ENCODE measurements at regions of chr13 and their contacts with region 1.

Region 1: GRCh38 chr13:99606324-99607066 is 105.2 kb downstream of the TM9SF2 start:
- DNase-seq: peak; percentile 87
- H3K4me3 ChIP-seq: peak within 1 kb of the TSS; percentile 56 to 72
- H3K27ac ChIP-seq: peak within 1 kb of the TSS; percentile 72 to 76
- H3K4me1 ChIP-seq: no peaks in the 10 kb centered on the region
- H3K27me3 ChIP-seq: no peaks in the 10 kb centered on the region
- CTCF ChIP-seq: peak in 2 of 4 experiments; percentile 22 to 29
- POLR2A ChIP-seq: peak; percentile 74

Region 2: DNA sequence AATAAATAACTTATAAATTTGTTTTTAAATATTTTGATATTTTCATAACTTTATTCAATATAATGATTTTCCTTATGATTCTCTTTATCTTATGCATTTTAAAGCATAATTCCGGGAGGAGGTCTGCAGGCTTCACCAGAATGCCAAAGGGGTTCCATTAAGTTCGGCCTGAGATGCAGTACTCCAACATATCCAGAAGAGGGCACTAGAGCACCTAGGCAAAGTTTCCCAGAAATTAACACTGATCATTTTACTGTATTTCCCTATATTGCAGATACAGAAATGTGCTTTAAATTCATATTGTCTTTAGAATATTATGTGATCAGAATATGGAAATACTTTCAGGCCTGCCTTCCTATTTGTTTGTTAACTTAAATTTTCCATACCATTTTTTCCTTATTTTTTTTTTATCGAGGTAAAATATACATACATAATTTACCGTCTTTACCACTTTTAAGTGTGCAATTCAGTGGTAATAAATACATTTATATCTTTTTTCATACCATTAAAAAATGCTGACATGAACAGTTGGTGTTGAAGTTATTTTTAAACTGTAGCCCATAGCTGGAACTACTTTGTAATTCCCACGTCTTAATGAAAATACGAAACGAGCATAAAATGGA is 164.1 kb before region 1 on chr13:
- intact Hi-C with region 1: loop called (anchors 10 kb)
- DNase-seq: peak; percentile 40
- H3K4me3 ChIP-seq: no peak overlapping the region
- H3K27ac ChIP-seq: no peak overlapping the region
- H3K4me1 ChIP-seq: no peaks in the 10 kb centered on the region
- H3K27me3 ChIP-seq: peaks cover 2% of the 10 kb centered on the region
- CTCF ChIP-seq: peak; percentile 85 to 93 (median 88)
- POLR2A ChIP-seq: no peak

Measured in prostate gland (tissue), 2 donors.